ENCODE measurements at regions of chr3 and their contacts with region 1.

Region 1: DNA sequence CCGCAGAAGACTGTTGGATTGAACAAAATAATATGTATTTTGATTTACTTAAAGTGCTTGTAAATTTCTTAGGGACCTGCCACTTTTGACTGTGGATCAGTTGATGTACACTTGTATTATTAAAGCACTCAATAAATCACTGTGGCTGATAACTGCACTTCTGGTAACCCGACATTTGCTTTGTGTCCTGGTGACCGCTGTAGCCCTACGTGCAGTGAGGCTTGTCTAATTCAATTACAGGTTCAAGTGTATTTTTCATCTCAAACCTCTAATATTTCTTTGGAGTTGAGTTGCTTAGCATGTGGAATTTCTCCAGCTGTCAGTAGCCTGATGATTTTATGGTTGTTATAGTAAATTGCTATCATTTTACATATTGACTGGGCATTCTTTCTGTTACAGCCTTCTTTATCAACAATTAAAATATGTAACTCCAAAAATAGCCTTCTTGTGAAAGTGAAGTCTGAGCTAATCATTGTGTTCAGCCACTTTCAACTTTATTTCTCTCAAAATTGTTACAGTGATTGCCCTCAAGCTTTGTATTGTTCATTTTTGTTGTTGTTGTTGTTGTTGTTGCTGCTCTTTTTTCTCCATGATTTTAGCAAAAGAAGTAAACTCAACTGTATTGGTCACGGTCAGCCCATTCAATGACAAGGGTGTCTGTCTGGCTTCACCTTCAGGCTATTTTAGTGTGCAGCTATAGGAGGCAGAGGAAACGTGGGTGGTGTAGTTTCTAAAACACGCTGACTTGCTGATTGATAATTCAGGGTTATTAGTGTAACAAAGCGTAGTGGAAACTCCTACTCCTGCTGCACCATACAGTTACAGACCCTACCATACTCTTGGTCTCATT is 215.1 kb upstream of the UBE2E1 start:
- DNase-seq: peak; percentile 60
- H3K4me3 ChIP-seq: peak overlapping the region; percentile 23
- H3K27ac ChIP-seq: peak overlapping the region; percentile 95
- H3K4me1 ChIP-seq: peaks cover 83% of the 10 kb centered on the region
- CTCF ChIP-seq: no peak

Region 2: GRCh38 chr3:23377928-23378672 is 212.5 kb before region 1 on chr3:
- CTCF ChIA-PET with region 1: no interaction called
- POLR2A ChIA-PET with region 1: interaction called, 11 read pairs
- intact Hi-C with region 1: no loop called
- DNase-seq: peak; percentile 60
- H3K4me3 ChIP-seq: peak overlapping the region; percentile 46
- H3K27ac ChIP-seq: peak overlapping the region; percentile 79
- H3K4me1 ChIP-seq: peaks cover 72% of the 10 kb centered on the region
- CTCF ChIP-seq: no peak

Region 3: GRCh38 chr3:23580337-23580736 is 10.3 kb before region 1 on chr3:
- CTCF ChIA-PET with region 1: interaction called, 3 read pairs
- POLR2A ChIA-PET with region 1: interaction called, 11 read pairs
- intact Hi-C with region 1: no loop called
- DNase-seq: no peak
- H3K4me3 ChIP-seq: no peak overlapping the region
- H3K27ac ChIP-seq: no peak overlapping the region
- H3K4me1 ChIP-seq: peaks cover 15% of the 10 kb centered on the region
- CTCF ChIP-seq: no peak

Region 4: DNA sequence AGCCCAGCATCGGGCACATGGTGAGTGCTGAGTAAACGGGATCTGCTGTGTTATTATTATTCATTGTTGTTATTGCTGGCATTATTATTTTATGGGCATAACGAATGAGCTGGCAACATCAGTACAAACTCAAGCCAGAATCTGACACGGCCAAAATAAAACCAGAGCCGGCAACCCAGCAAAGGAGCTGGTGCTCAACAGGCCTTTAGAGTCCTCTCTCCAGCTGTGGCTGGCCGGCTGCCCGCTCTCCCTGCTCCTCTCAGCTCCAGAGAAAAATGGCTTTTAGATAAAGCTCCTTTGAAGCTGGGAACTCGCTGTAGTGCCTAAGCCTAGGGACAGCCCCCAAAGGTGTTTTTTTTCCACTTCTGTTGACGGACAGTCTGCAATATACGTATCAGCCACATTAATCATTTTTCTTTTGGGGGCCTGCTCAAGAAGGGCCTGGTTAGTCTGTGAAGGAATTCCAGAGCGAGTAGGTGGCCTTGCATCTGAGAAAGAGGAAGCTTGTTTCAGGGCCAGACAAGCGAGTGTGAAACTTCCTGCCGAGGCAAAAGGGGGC is 21.2 kb after region 1 on chr3:
- CTCF ChIA-PET with region 1: interaction called, 10 read pairs
- POLR2A ChIA-PET with region 1: interaction called, 26 read pairs
- intact Hi-C with region 1: no loop called
- DNase-seq: peak; percentile 64
- H3K4me3 ChIP-seq: peak overlapping the region; percentile 41
- H3K27ac ChIP-seq: peak overlapping the region; percentile 5
- H3K4me1 ChIP-seq: peaks cover 46% of the 10 kb centered on the region
- CTCF ChIP-seq: no peak

Region 5: GRCh38 chr3:23653647-23654525 is 63.2 kb after region 1 on chr3:
- CTCF ChIA-PET with region 1: interaction called, 3 read pairs
- POLR2A ChIA-PET with region 1: interaction called, 25 read pairs
- intact Hi-C with region 1: loop called (anchors 1 kb)
- DNase-seq: peak; percentile 97
- H3K4me3 ChIP-seq: peak overlapping the region; percentile 47
- H3K27ac ChIP-seq: peak overlapping the region; percentile 97
- H3K4me1 ChIP-seq: peaks cover 77% of the 10 kb centered on the region
- CTCF ChIP-seq: no peak

Region 6: DNA sequence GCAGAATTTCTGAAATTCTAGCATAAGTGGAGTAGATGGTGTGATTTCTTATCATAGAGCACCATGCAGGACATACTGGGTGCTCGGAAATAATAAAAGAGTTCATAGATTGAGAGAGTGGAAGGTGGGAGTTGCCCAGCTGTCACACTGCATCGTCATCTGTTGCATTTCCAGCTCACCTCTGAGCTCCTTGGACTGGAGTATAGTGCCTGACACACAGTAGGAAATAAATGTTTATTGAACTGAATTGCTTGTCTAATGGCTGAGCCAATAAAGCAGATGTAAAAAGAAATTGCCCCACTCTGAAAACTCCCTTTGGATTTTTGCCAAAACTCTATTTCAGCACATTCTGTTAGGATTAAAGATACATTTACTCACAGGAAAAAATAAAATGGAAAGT is 106.2 kb after region 1 on chr3:
- CTCF ChIA-PET with region 1: no interaction called
- POLR2A ChIA-PET with region 1: interaction called, 10 read pairs
- intact Hi-C with region 1: no loop called
- DNase-seq: no peak
- H3K4me3 ChIP-seq: no peak overlapping the region
- H3K27ac ChIP-seq: no peak overlapping the region
- H3K4me1 ChIP-seq: peaks cover 20% of the 10 kb centered on the region
- CTCF ChIP-seq: no peak

Region 7: GRCh38 chr3:23800731-23801130 is 210.1 kb after region 1 on chr3:
- CTCF ChIA-PET with region 1: no interaction called
- POLR2A ChIA-PET with region 1: no interaction called
- intact Hi-C with region 1: loop called (anchors 2 kb)
- DNase-seq: peak; percentile 69
- H3K4me3 ChIP-seq: no peak overlapping the region
- H3K27ac ChIP-seq: no peak overlapping the region
- H3K4me1 ChIP-seq: peaks cover 18% of the 10 kb centered on the region
- CTCF ChIP-seq: peak; percentile 72